Caco-2 (cell line): ENCODE measurements at regions of chr18 and their contacts with region 1.

Region 1: DNA sequence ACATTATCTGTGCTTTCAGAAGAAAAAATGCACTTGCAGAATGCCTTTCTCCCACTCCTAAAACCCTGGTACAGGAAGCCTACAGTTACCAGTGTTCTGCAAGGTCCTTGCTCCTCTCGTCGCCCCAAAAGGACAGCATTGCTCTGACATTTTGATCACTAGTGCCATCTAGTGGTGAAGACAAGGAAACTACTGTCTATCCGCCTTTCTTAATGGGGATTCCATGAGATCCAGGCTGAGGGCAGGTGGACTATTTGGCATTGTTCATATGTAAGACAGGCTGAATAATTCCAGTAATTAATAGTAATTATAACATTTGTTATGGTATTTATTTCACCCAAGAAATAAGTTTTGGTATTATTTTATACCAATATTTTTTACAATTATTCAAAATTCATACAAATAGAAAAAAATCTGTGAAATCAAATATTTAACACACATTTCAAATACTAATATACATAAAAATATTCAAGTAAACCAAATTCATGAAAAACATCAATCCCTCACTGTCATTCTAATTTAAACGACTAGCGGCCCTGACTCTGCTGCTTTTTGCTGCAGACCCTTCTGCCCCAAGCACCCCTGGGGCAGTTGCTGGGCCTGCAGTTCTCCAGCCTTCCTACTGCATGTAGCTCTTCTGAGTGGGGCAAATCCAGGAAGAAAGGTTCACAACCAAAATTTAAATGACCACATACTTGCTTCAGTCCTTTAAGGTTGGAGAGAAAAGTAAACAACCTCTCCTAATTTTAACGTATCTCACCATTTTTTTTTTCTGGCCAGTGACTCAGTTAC is 19.0 kb downstream of the TPGS2 start:
- DNase-seq: peak; percentile 27 to 31
- H3K4me3 ChIP-seq: no peak overlapping the region
- H3K4me3 Mint-ChIP-seq: no peak overlapping the region
- H3K27ac Mint-ChIP-seq: no peak overlapping the region
- H3K4me1 ChIP-seq: no peaks in the 10 kb centered on the region
- H3K4me1 Mint-ChIP-seq: no peaks in the 10 kb centered on the region
- H3K27me3 ChIP-seq: no peaks in the 10 kb centered on the region
- H3K27me3 Mint-ChIP-seq: no peaks in the 10 kb centered on the region
- CTCF ChIP-seq: peak; percentile 24 to 51

Region 2: GRCh38 chr18:36688020-36688965 is 121.5 kb before region 1 on chr18:
- CTCF ChIA-PET with region 1: no interaction called
- POLR2A ChIA-PET with region 1: no interaction called
- intact Hi-C with region 1: loop called (anchors 1 kb)
- DNase-seq: peak; percentile 45 to 67
- H3K4me3 ChIP-seq: no peak overlapping the region
- H3K4me3 Mint-ChIP-seq: no peak overlapping the region
- H3K27ac Mint-ChIP-seq: no peak overlapping the region
- H3K4me1 ChIP-seq: no peaks in the 10 kb centered on the region
- H3K4me1 Mint-ChIP-seq: no peaks in the 10 kb centered on the region
- H3K27me3 ChIP-seq: no peaks in the 10 kb centered on the region; the same call in 1 of the 2 replicates
- H3K27me3 Mint-ChIP-seq: peaks cover 16% of the 10 kb centered on the region
- CTCF ChIP-seq: peak; percentile 45 to 72

Region 3: GRCh38 chr18:36769611-36770314 is 40.0 kb before region 1 on chr18:
- CTCF ChIA-PET with region 1: no interaction called
- POLR2A ChIA-PET with region 1: no interaction called
- intact Hi-C with region 1: loop called (anchors 1 kb)
- DNase-seq: peak; percentile 38 to 53
- H3K4me3 ChIP-seq: no peak overlapping the region
- H3K4me3 Mint-ChIP-seq: no peak overlapping the region
- H3K27ac Mint-ChIP-seq: no peak overlapping the region
- H3K4me1 ChIP-seq: no peaks in the 10 kb centered on the region
- H3K4me1 Mint-ChIP-seq: no peaks in the 10 kb centered on the region
- H3K27me3 ChIP-seq: no peaks in the 10 kb centered on the region
- H3K27me3 Mint-ChIP-seq: no peaks in the 10 kb centered on the region
- CTCF ChIP-seq: peak in 1 of 2 experiments; percentile 53